GM13977 (cell line): ENCODE measurements at regions of chr17 and their contacts with region 1.

Region 1: DNA sequence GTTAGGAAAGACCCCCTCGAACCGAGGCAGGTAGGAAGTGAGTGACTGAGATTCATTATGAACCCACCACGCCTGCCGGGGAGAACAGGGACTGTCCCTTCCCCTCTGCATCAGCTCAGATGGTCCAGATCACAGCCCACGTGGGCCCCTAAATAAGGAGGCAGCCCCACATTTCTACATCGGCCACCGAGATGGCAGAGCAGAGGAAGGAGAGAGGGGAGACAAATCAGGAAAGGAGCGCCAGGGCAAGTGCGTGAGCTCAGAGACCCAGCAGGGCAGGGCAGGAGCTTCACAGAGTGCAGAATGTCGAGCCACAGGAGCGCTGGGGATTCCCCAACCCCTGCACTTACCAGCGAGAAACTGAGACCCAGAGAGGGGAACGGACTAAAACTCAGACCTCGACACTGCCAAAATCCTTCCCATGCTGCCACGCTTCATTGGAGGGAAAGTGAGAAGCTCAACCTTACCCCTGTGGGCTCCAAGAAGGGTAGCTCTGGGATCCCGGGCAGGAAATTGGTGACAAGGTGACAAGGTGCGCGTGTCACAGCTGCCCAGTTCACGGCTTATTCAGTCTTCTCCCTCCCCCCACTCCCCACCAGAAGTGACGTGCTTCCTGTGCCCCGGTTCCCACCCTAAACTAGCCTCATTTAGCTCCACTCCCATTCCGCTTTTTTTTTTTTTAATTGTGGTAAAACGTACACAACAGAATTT is at the start of gene ICAM2:
- DNase-seq: peak; percentile 64
- CTCF ChIP-seq: no peak

Region 2: GRCh38 chr17:63919311-63919723 is 100.9 kb before region 1 on chr17:
- in situ Hi-C with region 1: loop called (anchors 10 kb)
- DNase-seq: peak; percentile 81
- CTCF ChIP-seq: peak; percentile 96

Region 3: DNA sequence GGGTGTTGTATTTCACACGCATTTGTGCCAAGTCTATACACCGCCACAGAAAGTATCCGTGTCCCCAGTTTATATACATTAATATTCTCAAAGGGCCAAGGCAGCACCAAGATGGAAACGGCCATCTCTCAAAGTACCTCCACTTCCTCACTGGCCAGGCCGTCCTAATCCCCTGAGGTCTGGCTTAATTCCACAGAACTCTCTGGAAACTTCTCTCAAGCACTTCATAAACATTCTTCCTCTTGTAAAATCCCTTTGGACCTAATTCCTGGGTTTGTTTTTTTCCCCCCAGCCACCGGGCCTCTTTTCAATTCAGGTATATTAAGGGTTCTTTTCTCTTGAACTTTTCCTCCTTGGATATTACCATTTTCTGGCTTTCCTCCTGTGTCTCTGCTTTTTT is 114.8 kb after region 1 on chr17:
- in situ Hi-C with region 1: loop called (anchors 5 kb)
- DNase-seq: no peak
- CTCF ChIP-seq: no peak

Region 4: GRCh38 chr17:64306850-64307463 is 286.7 kb after region 1 on chr17:
- in situ Hi-C with region 1: no loop called
- DNase-seq: peak; percentile 76
- CTCF ChIP-seq: peak; percentile 82

Region 5: DNA sequence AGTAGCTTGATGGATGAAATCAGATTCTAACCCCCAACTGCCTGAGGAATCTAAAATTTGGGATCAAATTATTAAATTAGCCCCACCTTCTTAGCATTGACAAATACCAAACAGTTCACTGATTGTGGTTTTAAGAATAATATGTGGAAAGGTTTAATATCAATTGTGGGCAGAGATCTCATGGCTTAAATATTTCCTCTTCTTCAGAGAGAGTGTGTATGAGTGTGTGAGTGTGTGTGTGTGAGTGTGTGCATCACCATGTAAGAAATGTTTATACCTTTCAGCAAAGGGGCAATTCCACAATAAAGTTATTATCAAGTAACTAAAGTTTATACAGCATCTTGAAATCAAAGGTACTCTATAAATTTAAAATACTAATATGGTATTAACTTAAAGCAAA is 638.7 kb after region 1 on chr17:
- in situ Hi-C with region 1: no loop called
- DNase-seq: no peak
- CTCF ChIP-seq: no peak